Sigmoid colon (tissue), 7 donors: ENCODE measurements at regions of chr9 and their contacts with region 1.

Region 1: DNA sequence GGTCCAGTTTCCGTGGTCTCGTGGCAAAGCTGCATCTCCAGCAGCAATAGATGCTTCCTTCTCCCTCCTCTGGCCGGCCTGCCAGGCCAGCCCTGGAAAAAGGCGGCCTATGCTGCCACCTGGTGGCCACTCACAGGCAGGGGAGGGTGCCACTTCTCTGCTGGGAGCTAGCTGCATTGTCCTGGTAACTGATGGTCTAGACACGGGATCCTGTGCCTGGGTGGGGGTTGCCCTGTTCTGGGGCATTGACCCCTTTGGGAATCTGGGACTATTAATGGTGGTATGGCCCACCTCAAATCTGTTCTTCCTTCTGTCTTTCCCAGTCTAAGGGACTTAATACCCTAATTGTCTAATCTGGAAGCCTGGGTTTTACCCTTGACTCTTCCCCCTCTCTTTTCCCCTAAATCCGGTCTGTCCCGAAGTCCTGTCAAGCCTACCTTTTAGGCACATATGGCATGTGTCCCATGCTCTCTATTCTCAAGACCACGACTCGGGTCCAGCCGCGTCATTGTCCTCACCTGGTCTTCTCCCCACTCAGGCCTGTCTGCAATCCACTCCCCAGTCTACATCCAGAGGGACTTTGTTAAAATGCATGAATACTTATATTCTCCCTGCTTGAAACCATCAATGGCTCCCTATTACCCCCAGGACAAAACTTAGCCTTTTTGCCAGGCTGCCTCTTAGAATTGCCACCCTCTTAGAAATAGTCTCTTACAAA is 20.0 kb upstream of the PTGS1 start:
- DNase-seq: peak; percentile 90
- H3K4me3 ChIP-seq: no peak overlapping the region
- H3K27ac ChIP-seq: no peak overlapping the region
- H3K4me1 ChIP-seq: peaks cover 0 to 23% (median 13%) of the 10 kb centered on the region in 4 donors
- H3K27me3 ChIP-seq: no peaks in the 10 kb centered on the region
- CTCF ChIP-seq: peak; percentile 87 to 98 (median 96)
- EP300 ChIP-seq: no peak
- POLR2A ChIP-seq: no peak

Region 2: DNA sequence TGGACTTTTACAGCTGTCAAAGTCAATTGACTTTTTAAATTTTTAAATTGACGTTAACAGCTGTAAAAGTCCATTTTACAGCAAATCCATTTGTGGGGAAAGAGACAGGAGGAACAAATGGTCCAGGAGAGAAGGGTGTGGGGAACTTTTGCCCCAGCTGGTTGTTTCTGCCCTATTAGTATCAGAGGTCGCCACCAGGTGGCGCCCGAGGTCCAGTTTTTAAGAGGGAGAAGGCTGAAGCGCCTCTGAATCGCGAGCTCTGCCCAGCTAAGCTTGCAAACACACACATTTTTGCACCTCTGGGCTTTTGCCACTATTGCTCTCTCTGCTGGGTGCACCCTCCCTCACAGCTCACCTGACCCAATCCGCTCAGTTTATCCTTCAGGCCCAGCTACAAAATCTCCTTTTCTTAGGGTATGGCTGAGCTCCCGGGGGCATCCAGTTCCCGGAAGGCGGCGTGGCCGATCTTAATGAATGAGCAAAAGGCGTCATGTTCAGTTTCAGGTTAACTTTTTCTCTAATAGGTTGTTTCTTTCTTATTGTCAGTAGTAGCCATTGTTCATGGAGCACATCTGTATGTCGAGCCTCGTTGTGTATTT is 251.4 kb before region 1 on chr9:
- intact Hi-C with region 1: loop called (anchors 1 kb)
- DNase-seq: peak; percentile 92
- H3K4me3 ChIP-seq: no peak overlapping the region
- H3K27ac ChIP-seq: no peak overlapping the region
- H3K4me1 ChIP-seq: peaks cover 0 to 4% (median 4%) of the 10 kb centered on the region in 4 donors
- H3K27me3 ChIP-seq: no peaks in the 10 kb centered on the region
- CTCF ChIP-seq: peak; percentile 47 to 88 (median 78)
- EP300 ChIP-seq: no peak
- POLR2A ChIP-seq: no peak

Region 3: GRCh38 chr9:122264360-122265148 is 86.2 kb before region 1 on chr9 and contains the starts of genes MRRF and RBM18:
- intact Hi-C with region 1: loop called (anchors 2 kb)
- DNase-seq: peak; percentile 95
- H3K4me3 ChIP-seq: peak within 1 kb of the TSS; percentile 56 to 84 (median 70)
- H3K27ac ChIP-seq: peak within 1 kb of the TSS; percentile 86 to 93 (median 92)
- H3K4me1 ChIP-seq: peaks cover 0 to 42% (median 39%) of the 10 kb centered on the region in 4 donors
- H3K27me3 ChIP-seq: no peaks in the 10 kb centered on the region
- CTCF ChIP-seq: no peak
- EP300 ChIP-seq: peak in 1 of 4 donors; percentile 16
- POLR2A ChIP-seq: peak in 1 of 2 donors; percentile 63
- total RNA-seq, gene MRRF: 29.9 to 40.7 (median 33.9) TPM
- total RNA-seq, gene RBM18: 11.9 to 16.8 (median 13.0) TPM

Region 4: GRCh38 chr9:122453677-122454135 is 102.9 kb after region 1 on chr9:
- intact Hi-C with region 1: loop called (anchors 5 kb)
- DNase-seq: no peak
- H3K4me3 ChIP-seq: no peak overlapping the region
- H3K27ac ChIP-seq: no peak overlapping the region
- H3K4me1 ChIP-seq: peaks cover 0 to 22% (median 7%) of the 10 kb centered on the region in 4 donors
- H3K27me3 ChIP-seq: no peaks in the 10 kb centered on the region
- CTCF ChIP-seq: no peak
- EP300 ChIP-seq: no peak
- POLR2A ChIP-seq: no peak